Activated T-helper 2 cell treated with anti-CD3 and anti-CD28 coated beads, Interferon-gamma antibody, Interleukin-2, Interleukin-4, amounts not matched to agents 10 μg/mL and 5 μg/mL and 100 μg/mL, durations not matched to agents 14 hours and 24 hours and 36 hours (primary cell): ENCODE measurements at regions of chr4 and their contacts with region 1.

Region 1: GRCh38 chr4:6640292-6641163 is at the start of gene MRFAP1:
- DNase-seq: peak; percentile 93
- H3K4me3 Mint-ChIP-seq: peak within 1 kb of the TSS; percentile 97
- H3K27ac Mint-ChIP-seq: peak within 1 kb of the TSS; percentile 99
- H3K4me1 Mint-ChIP-seq: peaks cover 13% of the 10 kb centered on the region
- H3K27me3 Mint-ChIP-seq: no peaks in the 10 kb centered on the region
- total RNA-seq, gene MRFAP1: 105 TPM in 2 replicates

Region 2: DNA sequence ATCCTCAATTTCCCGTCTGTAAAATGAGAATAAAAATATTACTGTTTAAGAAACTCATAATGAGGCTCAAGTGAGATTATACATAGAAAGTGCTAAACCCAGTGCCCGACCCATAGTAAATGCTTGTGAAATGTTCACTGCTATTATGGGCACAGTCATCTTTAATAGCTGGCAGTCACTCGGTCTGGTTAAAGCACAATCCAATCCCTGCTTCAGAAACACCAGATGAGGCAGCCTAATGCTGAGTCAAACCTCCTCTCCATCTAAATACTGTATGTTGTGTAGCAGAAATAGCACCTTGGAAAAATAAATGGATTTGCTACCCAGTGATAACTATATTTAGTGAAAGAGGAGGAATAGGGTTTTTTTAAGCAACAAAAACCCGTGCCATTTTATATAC is 946.7 kb before region 1 on chr4:
- intact Hi-C with region 1: no loop called
- DNase-seq: no peak
- H3K4me3 Mint-ChIP-seq: no peak overlapping the region
- H3K27ac Mint-ChIP-seq: no peak overlapping the region
- H3K4me1 Mint-ChIP-seq: no peaks in the 10 kb centered on the region
- H3K27me3 Mint-ChIP-seq: no peaks in the 10 kb centered on the region

Region 3: GRCh38 chr4:6574747-6575502 is 65.6 kb before region 1 on chr4 and contains the start of gene MAN2B2:
- intact Hi-C with region 1: loop called (anchors 1 kb)
- DNase-seq: peak; percentile 78
- H3K4me3 Mint-ChIP-seq: peak within 1 kb of the TSS; percentile 84
- H3K27ac Mint-ChIP-seq: peak within 1 kb of the TSS; percentile 79
- H3K4me1 Mint-ChIP-seq: peaks cover 6% of the 10 kb centered on the region
- H3K27me3 Mint-ChIP-seq: peaks cover 6% of the 10 kb centered on the region
- total RNA-seq, gene MAN2B2: 14.9 and 16.3 TPM in 2 replicates

Region 4: GRCh38 chr4:6695660-6696630 is 55.4 kb after region 1 on chr4:
- intact Hi-C with region 1: loop called (anchors 1 kb)
- DNase-seq: peak; percentile 66
- H3K4me3 Mint-ChIP-seq: peak overlapping the region; percentile 61
- H3K27ac Mint-ChIP-seq: peak overlapping the region; percentile 97
- H3K4me1 Mint-ChIP-seq: peaks cover 72% of the 10 kb centered on the region
- H3K27me3 Mint-ChIP-seq: no peaks in the 10 kb centered on the region

Region 5: GRCh38 chr4:6709230-6710114 is 68.9 kb after region 1 on chr4 and contains the start of gene MRFAP1L1:
- intact Hi-C with region 1: loop called (anchors 1 kb)
- DNase-seq: peak; percentile 94
- H3K4me3 Mint-ChIP-seq: peak within 1 kb of the TSS; percentile 94
- H3K27ac Mint-ChIP-seq: peak within 1 kb of the TSS; percentile 95
- H3K4me1 Mint-ChIP-seq: peaks cover 51% of the 10 kb centered on the region
- H3K27me3 Mint-ChIP-seq: peaks cover 2% of the 10 kb centered on the region
- total RNA-seq, gene MRFAP1L1: 46.6 and 49.6 TPM in 2 replicates

Region 6: GRCh38 chr4:6783053-6783981 is 142.8 kb after region 1 on chr4:
- intact Hi-C with region 1: loop called (anchors 1 kb)
- DNase-seq: peak; percentile 86
- H3K4me3 Mint-ChIP-seq: peak overlapping the region; percentile 79
- H3K27ac Mint-ChIP-seq: peak overlapping the region; percentile 75
- H3K4me1 Mint-ChIP-seq: peaks cover 55% of the 10 kb centered on the region
- H3K27me3 Mint-ChIP-seq: no peaks in the 10 kb centered on the region

Region 7: DNA sequence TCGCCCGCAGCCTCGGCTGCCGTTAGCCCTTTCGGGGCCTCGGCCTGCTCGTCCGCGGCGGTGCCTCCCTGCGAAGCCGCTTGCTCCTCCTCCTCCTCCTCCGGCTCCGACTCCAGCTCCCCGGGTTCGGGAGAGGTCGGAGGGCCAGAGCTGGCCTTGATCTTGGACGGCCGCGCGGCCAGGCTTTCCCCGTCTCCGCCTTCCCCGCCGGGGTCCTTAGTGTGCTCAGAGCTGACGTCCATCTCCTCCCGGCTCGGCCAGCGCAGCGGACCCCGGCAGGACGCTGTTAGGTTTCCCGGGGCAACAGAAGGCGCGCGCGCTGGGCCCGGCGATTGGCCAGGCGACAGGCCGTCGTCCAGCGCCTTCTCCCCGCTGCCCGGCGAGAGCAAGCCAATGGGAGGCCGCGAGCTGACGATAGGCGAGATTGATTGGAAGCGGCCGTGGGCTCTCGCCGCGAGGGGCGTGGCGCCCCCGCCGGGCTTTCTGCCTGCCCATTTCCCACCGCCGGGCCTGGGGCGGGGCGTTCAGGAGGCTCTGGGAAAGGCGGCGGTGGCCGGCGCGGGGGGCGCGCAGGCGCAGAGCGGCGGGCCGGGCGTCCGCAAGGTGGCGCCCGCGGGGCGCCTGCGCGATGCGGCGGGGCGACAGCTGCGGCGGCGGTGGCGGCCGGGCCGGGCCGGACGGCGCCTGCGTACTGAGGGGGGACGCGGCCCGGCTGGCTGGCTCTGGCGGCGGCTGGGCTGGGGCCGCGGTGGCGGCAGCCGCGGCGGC is 402.4 kb after region 1 on chr4 and contains the start of gene TADA2B:
- intact Hi-C with region 1: loop called (anchors 1 kb)
- DNase-seq: peak; percentile 94
- H3K4me3 Mint-ChIP-seq: peak within 1 kb of the TSS; percentile 86
- H3K27ac Mint-ChIP-seq: peak within 1 kb of the TSS; percentile 65
- H3K4me1 Mint-ChIP-seq: peaks cover 38% of the 10 kb centered on the region
- H3K27me3 Mint-ChIP-seq: peaks cover 7% of the 10 kb centered on the region
- total RNA-seq, gene TADA2B: 12.9 and 13.3 TPM in 2 replicates